ENCODE measurements at regions of chr14 and their contacts with region 1.

Region 1: DNA sequence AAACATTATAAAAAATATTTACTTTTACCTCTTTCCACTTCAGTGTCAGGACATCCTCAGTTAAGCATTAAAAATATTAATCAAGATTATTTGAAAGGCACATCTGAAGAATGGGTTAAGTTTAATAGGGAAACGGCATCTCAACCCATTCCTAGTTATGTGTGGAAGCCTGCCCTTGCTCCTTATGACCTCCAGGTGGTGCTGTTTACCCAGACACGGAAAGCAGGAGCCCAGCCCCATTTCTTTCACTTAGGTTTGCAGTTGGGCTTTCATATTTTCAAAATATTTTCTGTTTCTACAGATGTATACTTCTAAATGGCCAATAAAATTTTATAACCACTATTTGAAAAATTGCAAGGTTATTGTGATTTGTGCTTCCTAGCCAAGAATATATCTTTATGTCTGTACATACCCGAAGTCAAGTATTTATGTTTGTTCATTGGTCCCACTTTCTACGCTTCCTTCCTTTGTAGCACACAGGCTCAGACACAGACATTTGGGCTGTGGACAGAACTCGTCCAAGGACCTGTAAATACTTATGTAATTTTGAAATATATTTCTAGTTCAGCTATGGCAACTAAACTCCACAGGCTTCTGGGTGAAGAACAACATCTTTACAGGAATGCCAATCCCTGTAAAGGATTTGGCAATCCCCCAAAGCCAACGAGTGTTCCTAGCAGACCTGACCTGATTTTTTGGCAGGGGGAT is 247.1 kb downstream of the AKAP6 start:
- DNase-seq: peak; percentile 39 to 87
- H3K4me3 ChIP-seq: peak overlapping the region in 2 of 4 donors; percentile 6 to 9
- H3K27ac ChIP-seq: no peak overlapping the region
- H3K4me1 ChIP-seq: peaks cover 0 to 15% (median 0%) of the 10 kb centered on the region in 4 donors
- H3K27me3 ChIP-seq: no peaks in the 10 kb centered on the region
- CTCF ChIP-seq: peak in 5 of 7 experiments; percentile 44 to 95 (median 92)
- EP300 ChIP-seq: no peak
- POLR2A ChIP-seq: no peak

Region 2: DNA sequence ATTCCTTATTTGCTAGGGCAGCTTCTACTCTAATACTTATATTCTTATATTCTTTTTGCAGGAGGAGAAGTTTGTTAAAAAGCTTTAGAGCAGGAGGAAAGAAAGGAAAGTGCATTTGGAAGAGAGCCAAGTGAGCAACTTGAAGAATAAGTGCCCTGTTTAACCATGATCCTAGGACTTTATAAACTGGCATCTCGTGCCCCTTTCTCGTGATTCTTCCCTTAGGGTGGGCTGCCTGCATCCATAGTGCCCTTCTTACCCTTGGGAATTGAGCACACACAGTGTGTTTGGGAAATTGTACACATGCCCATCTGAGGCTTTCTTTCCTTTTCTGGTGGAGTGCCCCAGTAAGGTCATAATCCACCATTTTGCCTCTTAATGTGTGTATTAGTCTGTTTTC is 873.2 kb before region 1 on chr14:
- intact Hi-C with region 1: no loop called
- DNase-seq: no peak
- H3K4me3 ChIP-seq: no peak overlapping the region
- H3K27ac ChIP-seq: no peak overlapping the region
- H3K4me1 ChIP-seq: no peaks in the 10 kb centered on the region
- H3K27me3 ChIP-seq: no peaks in the 10 kb centered on the region
- CTCF ChIP-seq: no peak
- EP300 ChIP-seq: no peak
- POLR2A ChIP-seq: no peak

Region 3: GRCh38 chr14:32693114-32693513 is 116.9 kb after region 1 on chr14:
- intact Hi-C with region 1: no loop called
- DNase-seq: no peak
- H3K4me3 ChIP-seq: no peak overlapping the region
- H3K27ac ChIP-seq: no peak overlapping the region
- H3K4me1 ChIP-seq: no peaks in the 10 kb centered on the region
- H3K27me3 ChIP-seq: no peaks in the 10 kb centered on the region
- CTCF ChIP-seq: no peak
- EP300 ChIP-seq: no peak
- POLR2A ChIP-seq: no peak

Region 4: DNA sequence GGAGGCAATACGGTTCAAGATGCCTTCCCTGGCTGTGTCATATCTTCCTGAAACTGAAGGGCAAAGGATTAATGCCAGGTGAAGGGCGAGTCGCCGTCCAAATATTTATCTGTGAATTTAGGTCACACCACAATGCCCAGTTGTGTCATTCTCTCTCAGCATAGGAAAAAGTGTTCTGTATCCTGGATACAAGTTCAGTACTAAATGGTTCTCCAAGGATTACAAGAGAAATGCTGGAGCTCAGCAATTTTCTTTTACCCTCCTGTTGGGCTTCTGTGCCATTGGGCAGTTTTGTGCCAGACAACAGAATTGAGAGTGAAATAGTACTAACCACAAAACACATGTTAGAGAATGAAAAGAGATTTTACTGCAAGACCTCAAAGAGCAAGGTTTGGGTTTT is 880.8 kb after region 1 on chr14:
- intact Hi-C with region 1: no loop called
- DNase-seq: no peak
- H3K4me3 ChIP-seq: no peak overlapping the region
- H3K27ac ChIP-seq: no peak overlapping the region
- H3K4me1 ChIP-seq: peaks cover 0 to 19% (median 3%) of the 10 kb centered on the region in 4 donors
- H3K27me3 ChIP-seq: no peaks in the 10 kb centered on the region
- CTCF ChIP-seq: no peak
- EP300 ChIP-seq: no peak
- POLR2A ChIP-seq: no peak

Region 5: DNA sequence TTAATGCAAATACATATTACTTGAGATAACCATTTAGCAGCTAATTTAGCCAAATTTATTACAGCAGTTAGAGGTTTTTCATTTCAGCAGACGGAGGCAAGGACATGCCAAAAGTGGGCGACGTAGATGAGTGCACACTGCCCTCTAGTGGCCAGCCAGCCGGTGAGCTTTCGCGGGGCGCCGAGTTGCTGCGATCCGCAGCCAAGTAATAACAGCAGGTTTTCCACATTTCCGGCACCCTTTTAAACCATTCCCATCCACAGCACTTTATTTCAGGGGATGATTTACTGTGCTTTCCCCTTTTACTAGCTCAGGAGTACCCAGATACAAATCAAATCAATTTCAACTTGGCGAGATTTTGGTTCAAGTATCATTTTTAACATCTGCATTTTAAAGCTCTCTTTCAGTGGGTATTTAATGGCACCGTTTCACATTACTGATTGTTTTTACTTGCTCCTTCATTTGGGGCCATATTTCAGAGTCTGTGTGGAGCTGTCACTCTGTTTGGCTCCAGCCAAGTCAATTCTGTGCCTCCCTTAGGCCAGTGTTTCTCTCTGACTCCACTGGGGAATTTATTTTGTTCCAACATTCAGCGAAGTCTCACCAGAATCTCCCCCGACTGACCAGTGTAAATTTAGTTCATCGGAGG is 1216.6 kb after region 1 on chr14:
- intact Hi-C with region 1: loop called (anchors 5 kb)
- DNase-seq: peak; percentile 85 to 95
- H3K4me3 ChIP-seq: peak overlapping the region in 3 of 4 donors; percentile 12 to 18 (median 16)
- H3K27ac ChIP-seq: peak overlapping the region in 2 of 5 donors; percentile 17 to 29
- H3K4me1 ChIP-seq: peaks cover 0 to 24% (median 9%) of the 10 kb centered on the region in 4 donors
- H3K27me3 ChIP-seq: no peaks in the 10 kb centered on the region
- CTCF ChIP-seq: peak in 5 of 7 experiments; percentile 73 to 97 (median 86)
- EP300 ChIP-seq: no peak
- POLR2A ChIP-seq: no peak